GM12878 (cell line): ENCODE measurements at regions of chr12 and their contacts with region 1.

Region 1: GRCh38 chr12:6833189-6833890 is 5.1 kb downstream of the P3H3 start:
- DNase-seq: no peak
- ATAC-seq: no peak
- H3K4me3 ChIP-seq: no peak overlapping the region
- H3K27ac ChIP-seq: no peak overlapping the region
- H3K4me1 ChIP-seq: peaks cover 4% of the 10 kb centered on the region
- H3K27me3 ChIP-seq: peaks cover 11 to 17% of the 10 kb centered on the region in 2 experiments
- CTCF ChIP-seq: no peak
- EP300 ChIP-seq: no peak
- POLR2A ChIP-seq: no peak
- RAD21 ChIP-seq: no peak

Region 2: GRCh38 chr12:6735448-6736191 is 97.7 kb before region 1 on chr12:
- CTCF ChIA-PET with region 1: interaction called, 23 read pairs
- POLR2A ChIA-PET with region 1: no interaction called
- RAD21 ChIA-PET with region 1: interaction called, 3 read pairs
- SMC1A ChIA-PET with region 1: interaction called, 3 read pairs
- in situ Hi-C with region 1: no loop called
- intact Hi-C with region 1: loop called (anchors 5 kb)
- DNase-seq: no peak
- ATAC-seq: peak; percentile 91
- H3K4me3 ChIP-seq: no peak overlapping the region
- H3K27ac ChIP-seq: 0 out of 2 replicates have a peak overlapping the region, but pooled peaks have one; percentile 60
- H3K4me1 ChIP-seq: peaks cover 5% of the 10 kb centered on the region; the same call in 1 of the 2 replicates
- H3K27me3 ChIP-seq: no peaks in the 10 kb centered on the region
- CTCF ChIP-seq: peak; percentile 59 to 64 (median 61)
- EP300 ChIP-seq: no peak
- POLR2A ChIP-seq: no peak
- RAD21 ChIP-seq: peak; percentile 67

Region 3: GRCh38 chr12:6792522-6793201 is 40.7 kb before region 1 on chr12:
- CTCF ChIA-PET with region 1: interaction called, 10 read pairs
- POLR2A ChIA-PET with region 1: no interaction called
- RAD21 ChIA-PET with region 1: no interaction called
- SMC1A ChIA-PET with region 1: no interaction called
- in situ Hi-C with region 1: no loop called
- intact Hi-C with region 1: no loop called
- DNase-seq: no peak
- ATAC-seq: peak; percentile 93
- H3K4me3 ChIP-seq: no peak overlapping the region
- H3K27ac ChIP-seq: no peak overlapping the region
- H3K4me1 ChIP-seq: peaks cover 15% of the 10 kb centered on the region
- H3K27me3 ChIP-seq: no peaks in the 10 kb centered on the region; a peak in 1 of 4 replicates
- CTCF ChIP-seq: no peak
- EP300 ChIP-seq: no peak
- POLR2A ChIP-seq: no peak
- RAD21 ChIP-seq: no peak